ENCODE measurements at regions of chr5 and their contacts with region 1.

Region 1: DNA sequence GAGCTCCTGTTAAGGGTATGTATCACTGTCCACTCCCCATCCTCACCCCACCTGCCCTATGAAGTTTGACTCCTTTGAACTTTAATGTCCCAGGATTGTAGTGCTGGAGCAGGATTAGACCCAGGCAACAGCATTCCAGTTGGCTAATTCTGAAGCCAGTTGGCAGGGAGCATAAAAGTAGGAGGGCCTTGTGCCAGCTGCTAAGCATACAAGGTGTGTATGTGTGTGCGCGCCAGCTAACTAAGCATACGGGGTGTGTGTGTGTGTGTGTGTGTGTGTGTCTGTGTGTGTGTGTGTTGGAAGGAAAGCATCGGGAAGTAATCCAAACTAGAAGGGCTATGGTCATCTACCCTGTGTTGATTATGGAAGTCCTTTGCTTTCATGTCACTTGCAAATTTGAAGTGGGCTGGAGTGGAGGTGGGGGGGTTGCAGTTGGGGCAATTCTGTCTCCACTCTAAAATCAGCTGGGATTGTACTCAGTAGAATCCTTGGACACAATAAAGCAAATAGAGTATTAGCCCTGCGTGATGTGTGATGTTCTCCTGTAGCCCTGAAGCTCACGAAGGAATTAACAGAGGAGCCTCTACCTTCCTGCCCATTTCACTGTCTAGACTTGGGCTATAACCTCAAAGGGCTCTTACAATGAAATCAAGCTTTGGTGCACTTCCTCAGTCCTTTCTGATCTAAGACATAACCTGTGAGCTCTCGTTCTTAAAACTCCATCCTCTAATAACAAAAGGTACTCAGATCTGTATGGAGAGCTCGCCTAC is 26.9 kb downstream of the HMGCR start:
- DNase-seq: no peak
- CTCF ChIP-seq: no peak

Region 2: GRCh38 chr5:75351139-75351926 is 12.6 kb before region 1 on chr5:
- CTCF ChIA-PET with region 1: interaction called, 22 read pairs
- POLR2A ChIA-PET with region 1: no interaction called
- DNase-seq: no peak
- CTCF ChIP-seq: no peak

Region 3: GRCh38 chr5:77259476-77259875 is 1895.6 kb after region 1 on chr5:
- CTCF ChIA-PET with region 1: no interaction called
- POLR2A ChIA-PET with region 1: interaction called, 10 read pairs
- DNase-seq: peak; percentile 20
- CTCF ChIP-seq: no peak

Measured in GM10248 (cell line).